Activated CD4-positive, alpha-beta memory T cell treated with anti-CD3 and anti-CD28 coated beads for 36 hours (primary cell): ENCODE measurements at regions of chr2 and their contacts with region 1.

Region 1: DNA sequence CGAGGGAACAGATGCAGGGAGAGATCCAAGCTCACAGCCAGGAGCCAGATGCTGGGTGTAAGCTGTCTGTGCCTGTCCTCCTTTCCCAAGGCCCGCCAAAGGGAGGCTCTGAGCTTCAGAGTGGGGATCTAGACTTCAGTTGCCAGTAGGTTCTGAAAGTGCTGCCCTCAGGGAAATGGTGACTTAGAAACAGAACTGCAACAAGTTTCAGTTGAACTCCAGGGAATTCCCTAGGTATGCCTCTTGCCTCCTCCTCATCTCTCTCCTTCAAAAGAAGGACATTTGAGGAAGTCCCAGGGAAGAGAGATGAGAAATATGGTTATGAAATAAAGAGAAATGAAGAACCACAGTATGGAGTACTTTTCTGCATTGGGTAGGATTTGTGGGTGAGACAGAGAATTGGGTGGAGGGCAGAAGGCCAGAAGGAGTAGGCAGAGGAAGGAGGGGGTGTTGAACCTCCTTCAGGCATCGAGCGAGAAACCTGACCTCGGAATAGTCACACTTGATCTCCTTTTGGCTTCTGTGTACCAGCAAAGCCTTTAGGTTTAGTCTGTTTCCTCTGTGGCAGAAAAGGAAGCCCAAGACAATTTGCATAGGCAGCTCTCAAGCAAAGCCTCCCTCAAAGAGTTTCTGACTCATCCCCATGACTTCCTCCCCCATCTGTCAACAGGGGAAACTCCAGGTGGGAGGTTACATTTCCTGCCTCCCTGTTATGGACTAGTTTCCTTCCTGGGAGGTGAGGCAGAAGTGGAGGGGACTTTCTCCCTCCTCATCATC is 45.7 kb downstream of the QPCT start:
- DNase-seq: peak; percentile 81
- H3K4me3 Mint-ChIP-seq: peak overlapping the region; percentile 4
- H3K27ac Mint-ChIP-seq: peak overlapping the region; percentile 76
- H3K4me1 Mint-ChIP-seq: peaks cover 13% of the 10 kb centered on the region
- H3K27me3 Mint-ChIP-seq: no peaks in the 10 kb centered on the region

Region 2: GRCh38 chr2:37168217-37168981 is 221.8 kb before region 1 on chr2:
- CTCF ChIA-PET with region 1: interaction called, 4 read pairs
- POLR2A ChIA-PET with region 1: no interaction called
- intact Hi-C with region 1: loop called (anchors 5 kb)
- DNase-seq: peak; percentile 41
- H3K4me3 Mint-ChIP-seq: no peak overlapping the region
- H3K27ac Mint-ChIP-seq: no peak overlapping the region
- H3K4me1 Mint-ChIP-seq: peaks cover 2% of the 10 kb centered on the region
- H3K27me3 Mint-ChIP-seq: no peaks in the 10 kb centered on the region

Region 3: DNA sequence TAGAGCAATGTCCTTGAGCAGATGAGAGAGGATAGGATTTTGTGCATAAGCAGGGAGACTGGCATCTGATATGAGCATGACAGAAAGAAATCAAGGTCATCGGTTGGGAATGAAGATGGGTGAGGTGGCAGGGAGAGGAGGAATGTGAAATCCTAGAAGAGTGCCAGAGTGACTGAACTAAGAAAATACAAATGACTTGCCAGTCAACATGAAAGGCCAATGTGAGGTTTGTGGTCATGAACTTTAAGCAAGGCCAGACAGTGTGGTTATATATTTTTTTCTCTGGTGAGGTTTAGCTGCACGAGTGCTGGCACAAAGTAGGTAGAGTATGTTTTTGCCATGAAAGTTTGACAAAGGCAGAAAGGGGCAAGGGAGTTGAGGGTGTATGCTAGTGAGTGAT is 24.5 kb before region 1 on chr2:
- CTCF ChIA-PET with region 1: interaction called, 5 read pairs
- POLR2A ChIA-PET with region 1: interaction called, 13 read pairs
- intact Hi-C with region 1: loop called (anchors 1 kb)
- DNase-seq: peak; percentile 22
- H3K4me3 Mint-ChIP-seq: no peak overlapping the region
- H3K27ac Mint-ChIP-seq: no peak overlapping the region
- H3K4me1 Mint-ChIP-seq: no peaks in the 10 kb centered on the region
- H3K27me3 Mint-ChIP-seq: peaks cover 31% of the 10 kb centered on the region

Region 4: DNA sequence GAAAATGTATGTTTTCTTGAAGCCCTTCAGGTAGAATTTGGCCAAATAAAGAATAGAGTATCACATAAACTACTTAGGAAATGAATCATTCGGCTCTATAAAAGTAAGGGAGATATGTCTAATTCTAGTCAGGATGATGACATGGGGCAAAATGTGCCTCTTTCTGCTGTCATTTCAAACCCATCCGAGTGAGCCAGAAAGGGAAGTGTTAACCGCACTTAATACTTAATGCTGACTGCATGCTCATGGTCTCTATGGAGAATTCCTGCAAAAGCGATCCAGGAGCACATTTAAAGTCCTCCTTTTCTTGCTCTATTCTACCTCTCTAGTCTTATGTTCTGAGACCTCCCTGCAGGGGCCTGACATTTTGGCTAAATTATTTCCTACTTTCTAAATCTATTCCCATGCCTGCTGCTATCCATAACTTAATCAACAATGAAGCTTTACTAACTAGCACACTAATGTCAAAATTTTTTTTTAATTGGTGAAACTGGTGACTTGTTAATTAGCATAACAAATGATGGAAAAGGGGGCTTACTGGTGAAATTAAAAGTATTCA is 153.9 kb after region 1 on chr2:
- CTCF ChIA-PET with region 1: interaction called, 10 read pairs
- POLR2A ChIA-PET with region 1: no interaction called
- intact Hi-C with region 1: no loop called
- DNase-seq: no peak
- H3K4me3 Mint-ChIP-seq: no peak overlapping the region
- H3K27ac Mint-ChIP-seq: no peak overlapping the region
- H3K4me1 Mint-ChIP-seq: no peaks in the 10 kb centered on the region
- H3K27me3 Mint-ChIP-seq: no peaks in the 10 kb centered on the region

Region 5: DNA sequence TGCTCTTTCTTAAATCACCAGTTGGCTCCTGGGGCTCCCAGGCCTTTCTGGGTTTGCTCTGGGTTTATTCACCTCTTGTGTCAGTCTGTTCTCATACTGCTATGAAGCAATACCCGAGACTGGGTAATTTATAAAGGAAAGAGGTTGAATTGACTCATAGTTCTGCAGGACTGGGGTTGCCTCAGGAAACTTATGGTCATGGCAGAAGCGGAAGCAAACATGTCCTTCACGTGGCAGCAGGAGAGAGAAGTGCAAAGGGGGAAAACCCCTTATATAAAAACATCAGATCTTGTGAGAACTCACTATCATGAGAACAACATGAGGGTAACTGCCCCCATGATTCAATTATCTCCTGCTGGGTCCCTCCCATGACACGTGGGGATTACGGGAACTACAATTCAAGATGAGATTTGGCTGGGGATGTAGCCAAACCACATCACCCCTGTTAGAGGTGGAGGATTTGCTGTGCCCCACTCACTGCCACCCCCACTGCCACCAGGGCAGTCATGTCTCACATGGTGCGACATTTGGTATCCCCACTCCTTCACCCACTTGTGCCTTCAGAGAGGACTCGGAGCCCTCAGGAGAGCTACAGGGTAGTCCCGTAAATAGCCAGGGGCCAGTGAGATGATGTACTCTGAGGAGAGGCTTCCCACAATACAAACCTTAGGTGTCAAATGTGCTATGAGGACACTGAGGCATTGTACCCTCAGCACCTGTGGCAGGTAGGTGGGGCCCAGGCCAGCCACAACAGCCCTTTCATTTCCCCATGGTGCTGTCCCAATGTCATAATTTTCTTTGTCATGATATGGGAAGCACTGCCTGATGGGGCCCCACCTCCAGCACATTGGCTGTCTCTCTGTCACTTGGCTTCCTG is 245.6 kb after region 1 on chr2:
- CTCF ChIA-PET with region 1: no interaction called
- POLR2A ChIA-PET with region 1: no interaction called
- intact Hi-C with region 1: loop called (anchors 2 kb)
- DNase-seq: peak; percentile 87
- H3K4me3 Mint-ChIP-seq: peak overlapping the region; percentile 38
- H3K27ac Mint-ChIP-seq: peak overlapping the region; percentile 94
- H3K4me1 Mint-ChIP-seq: peaks cover 65% of the 10 kb centered on the region
- H3K27me3 Mint-ChIP-seq: no peaks in the 10 kb centered on the region

Region 6: GRCh38 chr2:37871456-37872191 is 481.4 kb after region 1 on chr2:
- CTCF ChIA-PET with region 1: interaction called, 139 read pairs
- POLR2A ChIA-PET with region 1: interaction called, 5 read pairs
- intact Hi-C with region 1: loop called (anchors 1 kb)
- DNase-seq: no peak
- H3K4me3 Mint-ChIP-seq: peak overlapping the region; percentile 38
- H3K27ac Mint-ChIP-seq: peak overlapping the region; percentile 93
- H3K4me1 Mint-ChIP-seq: peaks cover 27% of the 10 kb centered on the region
- H3K27me3 Mint-ChIP-seq: no peaks in the 10 kb centered on the region

Region 7: GRCh38 chr2:38115216-38116032 is 725.2 kb after region 1 on chr2:
- CTCF ChIA-PET with region 1: interaction called, 3 read pairs
- POLR2A ChIA-PET with region 1: no interaction called
- intact Hi-C with region 1: loop called (anchors 10 kb)
- DNase-seq: peak; percentile 85
- H3K4me3 Mint-ChIP-seq: no peak overlapping the region
- H3K27ac Mint-ChIP-seq: no peak overlapping the region
- H3K4me1 Mint-ChIP-seq: no peaks in the 10 kb centered on the region
- H3K27me3 Mint-ChIP-seq: peaks cover 27% of the 10 kb centered on the region